CD4-positive, alpha-beta memory T cell (primary cell): ENCODE measurements at regions of chr1 and their contacts with region 1.

Region 1: DNA sequence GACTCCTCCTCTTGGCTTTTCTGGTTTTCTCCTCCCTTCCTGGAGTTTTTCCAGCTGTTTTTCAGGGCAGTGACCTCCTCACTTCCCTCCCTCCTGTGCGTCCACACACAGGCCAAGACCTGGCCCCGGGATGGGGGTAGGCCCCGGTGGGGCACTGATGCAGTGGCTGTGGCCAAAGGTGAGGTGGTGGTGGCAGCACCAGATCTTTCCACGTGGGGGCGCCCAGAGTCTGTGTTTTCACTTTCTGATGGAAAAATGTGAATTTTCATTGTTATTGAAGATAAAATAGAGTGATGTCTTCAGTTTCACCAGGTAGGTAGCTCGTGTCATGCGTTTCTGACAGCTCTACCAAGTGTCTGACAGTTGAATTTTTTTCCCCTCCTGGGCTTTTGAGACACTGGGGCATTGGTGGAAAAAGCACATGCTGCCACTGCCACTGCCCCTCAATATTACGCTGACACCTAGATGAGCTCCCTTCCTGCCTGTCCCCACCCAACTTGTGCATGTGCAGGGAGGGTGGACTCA is 39.9 kb upstream of the MAGOH start:
- DNase-seq: peak; percentile 59 to 69 (median 62)
- H3K4me3 ChIP-seq: no peak overlapping the region
- H3K4me3 Mint-ChIP-seq: no peak overlapping the region
- H3K27ac ChIP-seq: no peak overlapping the region
- H3K27ac Mint-ChIP-seq: peak overlapping the region in 5 of 7 donors; percentile 9 to 86 (median 76)
- H3K4me1 ChIP-seq: no peaks in the 10 kb centered on the region
- H3K4me1 Mint-ChIP-seq: peaks cover 0 to 5% (median 1%) of the 10 kb centered on the region in 4 donors
- H3K27me3 ChIP-seq: no peaks in the 10 kb centered on the region
- H3K27me3 Mint-ChIP-seq: no peaks in the 10 kb centered on the region

Region 2: GRCh38 chr1:52054496-52055065 is 1223.7 kb before region 1 on chr1:
- CTCF ChIA-PET with region 1: no interaction called
- POLR2A ChIA-PET with region 1: no interaction called
- intact Hi-C with region 1: no loop called
- DNase-seq: no peak
- H3K4me3 ChIP-seq: peak overlapping the region; percentile 81 to 92
- H3K4me3 Mint-ChIP-seq: peak overlapping the region; percentile 98 to 100 (median 98)
- H3K27ac ChIP-seq: peak overlapping the region; percentile 88
- H3K27ac Mint-ChIP-seq: peak overlapping the region; percentile 84 to 98 (median 96)
- H3K4me1 ChIP-seq: peaks cover 43% of the 10 kb centered on the region
- H3K4me1 Mint-ChIP-seq: peaks cover 38 to 71% (median 54%) of the 10 kb centered on the region in 4 donors
- H3K27me3 ChIP-seq: no peaks in the 10 kb centered on the region
- H3K27me3 Mint-ChIP-seq: no peaks in the 10 kb centered on the region

Region 3: GRCh38 chr1:53266106-53266505 is 12.2 kb before region 1 on chr1:
- CTCF ChIA-PET with region 1: interaction called, 11 read pairs
- POLR2A ChIA-PET with region 1: no interaction called
- intact Hi-C with region 1: no loop called
- DNase-seq: no peak
- H3K4me3 ChIP-seq: no peak overlapping the region
- H3K4me3 Mint-ChIP-seq: no peak overlapping the region
- H3K27ac ChIP-seq: no peak overlapping the region
- H3K27ac Mint-ChIP-seq: peak overlapping the region in 1 of 7 donors; percentile 69
- H3K4me1 ChIP-seq: no peaks in the 10 kb centered on the region
- H3K4me1 Mint-ChIP-seq: no peaks in the 10 kb centered on the region
- H3K27me3 ChIP-seq: no peaks in the 10 kb centered on the region
- H3K27me3 Mint-ChIP-seq: no peaks in the 10 kb centered on the region

Region 4: GRCh38 chr1:53349968-53350852 is 71.9 kb after region 1 on chr1:
- CTCF ChIA-PET with region 1: no interaction called
- POLR2A ChIA-PET with region 1: no interaction called
- intact Hi-C with region 1: no loop called
- DNase-seq: peak in 1 of 5 donors; percentile 8
- H3K4me3 ChIP-seq: no peak overlapping the region
- H3K4me3 Mint-ChIP-seq: no peak overlapping the region
- H3K27ac ChIP-seq: no peak overlapping the region
- H3K27ac Mint-ChIP-seq: peak overlapping the region in 4 of 7 donors; percentile 5 to 70 (median 21)
- H3K4me1 ChIP-seq: no peaks in the 10 kb centered on the region
- H3K4me1 Mint-ChIP-seq: peaks cover 0 to 2% (median under 1%) of the 10 kb centered on the region in 4 donors
- H3K27me3 ChIP-seq: no peaks in the 10 kb centered on the region
- H3K27me3 Mint-ChIP-seq: no peaks in the 10 kb centered on the region

Region 5: DNA sequence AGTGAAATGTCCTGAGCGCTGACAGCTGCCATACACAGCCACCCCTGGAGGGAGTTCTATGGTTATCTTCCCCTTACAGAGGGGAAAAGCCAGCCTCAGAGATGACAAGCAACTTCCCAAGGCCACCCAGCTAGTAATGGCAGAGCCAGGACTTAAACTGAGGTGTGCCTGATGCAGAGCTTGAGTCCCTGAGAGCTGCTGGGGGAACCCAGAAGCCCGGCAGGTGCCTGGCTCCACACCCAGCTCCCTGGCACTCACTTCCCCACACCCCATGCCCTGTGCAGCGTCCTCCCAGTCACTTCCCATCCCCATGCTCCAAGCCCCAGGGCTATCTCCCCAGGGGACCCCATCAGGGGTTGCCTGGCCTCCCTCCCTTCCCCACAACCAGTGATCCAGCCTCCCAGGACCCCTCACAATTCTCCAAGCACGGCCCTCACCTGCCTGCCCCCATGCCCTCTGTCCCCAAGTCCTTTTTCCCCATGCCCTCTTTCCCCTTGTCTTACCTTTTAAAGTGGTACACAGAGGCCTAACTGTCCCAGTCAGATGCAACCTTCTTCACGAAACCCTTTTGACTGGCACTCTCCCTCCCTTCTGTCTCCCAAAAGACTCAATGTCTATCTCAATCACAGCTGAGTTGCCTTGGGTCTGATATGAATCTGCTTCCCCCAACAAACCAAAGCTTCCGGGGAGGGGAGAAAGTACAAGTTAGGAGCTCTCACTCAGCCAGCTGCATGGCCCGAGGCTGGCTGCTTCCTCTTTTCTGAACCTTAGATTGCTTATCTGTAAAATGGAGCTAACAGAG is 89.4 kb after region 1 on chr1:
- CTCF ChIA-PET with region 1: interaction called, 13 read pairs
- POLR2A ChIA-PET with region 1: no interaction called
- intact Hi-C with region 1: no loop called
- DNase-seq: peak; percentile 27 to 57 (median 41)
- H3K4me3 ChIP-seq: peak overlapping the region in 1 of 2 donors; percentile 39
- H3K4me3 Mint-ChIP-seq: peak overlapping the region; percentile 87 to 96 (median 91)
- H3K27ac ChIP-seq: peak overlapping the region; percentile 10
- H3K27ac Mint-ChIP-seq: peak overlapping the region; percentile 61 to 98 (median 93)
- H3K4me1 ChIP-seq: peaks cover 28% of the 10 kb centered on the region
- H3K4me1 Mint-ChIP-seq: peaks cover 11 to 31% (median 22%) of the 10 kb centered on the region in 4 donors
- H3K27me3 ChIP-seq: no peaks in the 10 kb centered on the region
- H3K27me3 Mint-ChIP-seq: no peaks in the 10 kb centered on the region

Region 6: GRCh38 chr1:53393325-53393792 is 115.1 kb after region 1 on chr1:
- CTCF ChIA-PET with region 1: interaction called, 240 read pairs
- POLR2A ChIA-PET with region 1: interaction called, 10 read pairs
- intact Hi-C with region 1: no loop called
- DNase-seq: peak; percentile 49 to 71 (median 52)
- H3K4me3 ChIP-seq: no peak overlapping the region
- H3K4me3 Mint-ChIP-seq: peak overlapping the region in 1 of 8 donors; percentile 31
- H3K27ac ChIP-seq: no peak overlapping the region
- H3K27ac Mint-ChIP-seq: peak overlapping the region in 3 of 7 donors; percentile 13 to 29 (median 23)
- H3K4me1 ChIP-seq: peaks cover 5% of the 10 kb centered on the region
- H3K4me1 Mint-ChIP-seq: peaks cover 0 to 8% (median 2%) of the 10 kb centered on the region in 4 donors
- H3K27me3 ChIP-seq: no peaks in the 10 kb centered on the region
- H3K27me3 Mint-ChIP-seq: no peaks in the 10 kb centered on the region

Region 7: GRCh38 chr1:53470155-53470554 is 191.9 kb after region 1 on chr1:
- CTCF ChIA-PET with region 1: interaction called, 25 read pairs
- POLR2A ChIA-PET with region 1: no interaction called
- intact Hi-C with region 1: no loop called
- DNase-seq: no peak
- H3K4me3 ChIP-seq: no peak overlapping the region
- H3K4me3 Mint-ChIP-seq: no peak overlapping the region
- H3K27ac ChIP-seq: no peak overlapping the region
- H3K27ac Mint-ChIP-seq: no peak overlapping the region
- H3K4me1 ChIP-seq: no peaks in the 10 kb centered on the region
- H3K4me1 Mint-ChIP-seq: peaks cover 0 to 2% (median under 1%) of the 10 kb centered on the region in 4 donors
- H3K27me3 ChIP-seq: no peaks in the 10 kb centered on the region
- H3K27me3 Mint-ChIP-seq: no peaks in the 10 kb centered on the region

Region 8: GRCh38 chr1:53681977-53682685 is 403.9 kb after region 1 on chr1:
- CTCF ChIA-PET with region 1: interaction called, 4 read pairs
- POLR2A ChIA-PET with region 1: no interaction called
- intact Hi-C with region 1: loop called (anchors 2 kb)
- DNase-seq: peak in 4 of 5 donors; percentile 19 to 22 (median 20)
- H3K4me3 ChIP-seq: no peak overlapping the region
- H3K4me3 Mint-ChIP-seq: peak overlapping the region in 7 of 8 donors; percentile 27 to 72 (median 45)
- H3K27ac ChIP-seq: no peak overlapping the region
- H3K27ac Mint-ChIP-seq: peak overlapping the region in 1 of 7 donors; percentile 66
- H3K4me1 ChIP-seq: peaks cover 5% of the 10 kb centered on the region
- H3K4me1 Mint-ChIP-seq: peaks cover 5 to 7% (median 6%) of the 10 kb centered on the region in 4 donors
- H3K27me3 ChIP-seq: no peaks in the 10 kb centered on the region
- H3K27me3 Mint-ChIP-seq: peaks cover 16 to 18% of the 10 kb centered on the region in 2 donors